Activated CD8-positive, alpha-beta T cell treated with anti-CD3 and anti-CD28 coated beads for 36 hours (primary cell): ENCODE measurements at regions of chr13 and their contacts with region 1.

Region 1: GRCh38 chr13:27147530-27148170 is 24.0 kb downstream of the USP12 start:
- DNase-seq: no peak
- ATAC-seq: peak; percentile 83
- H3K4me3 Mint-ChIP-seq: peak overlapping the region; percentile 61
- H3K27ac Mint-ChIP-seq: peak overlapping the region; percentile 98
- H3K4me1 Mint-ChIP-seq: peaks cover 76% of the 10 kb centered on the region
- H3K27me3 Mint-ChIP-seq: no peaks in the 10 kb centered on the region
- CTCF ChIP-seq: no peak

Region 2: DNA sequence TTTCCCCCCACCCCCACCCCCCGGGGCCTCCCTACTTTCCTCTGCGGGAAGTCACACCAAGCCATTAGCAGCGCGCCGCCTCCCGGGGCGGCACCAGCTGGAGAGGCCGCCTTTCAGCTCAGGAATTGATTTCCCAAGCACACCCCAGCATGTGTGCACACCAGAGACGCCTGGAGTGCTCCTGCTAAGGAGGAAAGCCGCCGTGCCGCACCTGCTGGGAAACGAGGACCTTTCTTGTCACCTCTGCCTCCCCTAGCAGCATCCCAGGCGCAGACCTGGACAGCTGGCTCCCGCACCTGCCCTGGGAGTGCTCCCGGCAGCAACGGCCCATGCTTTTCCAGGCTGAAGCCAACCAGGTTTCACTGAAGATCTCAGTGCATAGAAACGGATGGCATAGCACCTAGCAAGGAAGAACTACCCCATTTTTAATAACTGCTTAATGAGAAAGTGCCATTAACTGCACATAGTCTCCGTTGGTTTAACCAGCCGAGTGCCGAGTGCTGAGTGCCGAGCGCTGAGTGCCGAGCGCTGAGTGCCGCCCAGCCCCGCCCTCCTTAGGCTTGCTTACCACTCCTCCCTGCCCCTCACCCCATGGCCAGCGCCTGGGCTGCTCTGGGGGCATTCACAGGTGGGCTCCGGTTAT is 141.0 kb before region 1 on chr13:
- CTCF ChIA-PET with region 1: no interaction called
- POLR2A ChIA-PET with region 1: no interaction called
- intact Hi-C with region 1: no loop called
- DNase-seq: peak; percentile 7
- ATAC-seq: no peak
- H3K4me3 Mint-ChIP-seq: no peak overlapping the region
- H3K27ac Mint-ChIP-seq: no peak overlapping the region
- H3K4me1 Mint-ChIP-seq: peaks cover 8% of the 10 kb centered on the region
- H3K27me3 Mint-ChIP-seq: peaks cover 46% of the 10 kb centered on the region
- CTCF ChIP-seq: no peak

Region 3: GRCh38 chr13:27130979-27131623 is 16.5 kb before region 1 on chr13:
- CTCF ChIA-PET with region 1: interaction called, 7 read pairs
- POLR2A ChIA-PET with region 1: interaction called, 5 read pairs
- intact Hi-C with region 1: loop called (anchors 2 kb)
- DNase-seq: peak; percentile 90
- ATAC-seq: peak; percentile 86
- H3K4me3 Mint-ChIP-seq: peak overlapping the region; percentile 7
- H3K27ac Mint-ChIP-seq: peak overlapping the region; percentile 82
- H3K4me1 Mint-ChIP-seq: peaks cover 89% of the 10 kb centered on the region
- H3K27me3 Mint-ChIP-seq: no peaks in the 10 kb centered on the region
- CTCF ChIP-seq: no peak

Region 4: DNA sequence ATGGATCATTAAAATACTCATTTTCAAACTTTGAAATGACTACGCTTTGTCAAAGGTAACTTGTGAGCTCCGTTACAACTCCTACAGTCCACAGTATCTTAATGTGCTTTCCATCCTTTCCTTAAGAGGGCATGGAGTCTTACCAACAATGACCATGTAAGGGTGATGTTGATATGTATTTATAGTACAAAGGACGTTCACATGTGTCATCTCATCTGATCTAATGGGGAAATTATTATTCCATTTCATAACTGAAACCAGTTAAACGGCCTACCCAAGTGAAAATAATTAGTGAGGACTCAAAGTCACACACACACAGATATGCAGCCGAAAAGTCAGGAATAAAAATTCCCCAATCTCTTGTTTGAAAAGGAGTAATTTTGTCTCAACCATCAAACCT is 14.3 kb after region 1 on chr13:
- CTCF ChIA-PET with region 1: interaction called, 17 read pairs
- POLR2A ChIA-PET with region 1: interaction called, 6 read pairs
- intact Hi-C with region 1: no loop called
- DNase-seq: no peak
- ATAC-seq: no peak
- H3K4me3 Mint-ChIP-seq: no peak overlapping the region
- H3K27ac Mint-ChIP-seq: no peak overlapping the region
- H3K4me1 Mint-ChIP-seq: peaks cover 65% of the 10 kb centered on the region
- H3K27me3 Mint-ChIP-seq: no peaks in the 10 kb centered on the region
- CTCF ChIP-seq: no peak

Region 5: DNA sequence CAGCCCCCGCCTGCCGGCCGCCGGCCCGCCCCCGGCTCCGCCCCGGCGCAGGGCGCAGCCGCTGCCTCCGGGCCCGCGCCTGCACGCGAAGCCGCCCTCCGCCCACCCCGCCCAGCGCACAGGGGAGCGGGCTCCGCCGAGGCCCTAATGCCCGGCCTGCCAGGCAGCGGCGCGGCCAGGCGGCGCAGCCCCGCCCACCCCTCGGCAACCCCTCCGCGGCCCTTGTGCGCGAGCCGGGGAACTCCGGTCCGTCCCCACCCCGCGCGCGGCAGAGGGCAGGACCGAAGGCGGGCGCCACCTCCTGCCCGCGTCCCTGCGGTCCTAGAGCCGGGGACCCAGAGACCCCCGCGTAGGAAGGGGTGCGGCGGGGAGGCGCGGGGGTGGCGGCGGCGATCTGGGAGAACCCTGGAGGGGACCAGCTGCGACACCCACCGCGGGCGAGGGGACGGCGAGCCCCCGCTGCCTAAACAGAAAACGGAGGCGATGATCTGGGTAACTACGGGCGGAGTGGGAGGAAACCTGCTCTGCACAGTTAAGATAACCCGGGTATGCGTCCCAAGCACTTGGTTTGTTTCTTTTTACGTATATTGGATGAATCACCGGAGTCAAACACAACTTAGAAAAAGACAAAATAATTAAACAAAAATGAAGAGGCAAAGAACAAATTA is 24.3 kb after region 1 on chr13:
- CTCF ChIA-PET with region 1: no interaction called
- POLR2A ChIA-PET with region 1: interaction called, 3 read pairs
- intact Hi-C with region 1: loop called (anchors 2 kb)
- DNase-seq: peak; percentile 88
- ATAC-seq: peak; percentile 84
- H3K4me3 Mint-ChIP-seq: peak overlapping the region; percentile 70
- H3K27ac Mint-ChIP-seq: peak overlapping the region; percentile 83
- H3K4me1 Mint-ChIP-seq: peaks cover 54% of the 10 kb centered on the region
- H3K27me3 Mint-ChIP-seq: no peaks in the 10 kb centered on the region
- CTCF ChIP-seq: no peak

Region 6: GRCh38 chr13:27211771-27212364 is 64.2 kb after region 1 on chr13:
- CTCF ChIA-PET with region 1: no interaction called
- POLR2A ChIA-PET with region 1: no interaction called
- intact Hi-C with region 1: no loop called
- DNase-seq: no peak
- ATAC-seq: no peak
- H3K4me3 Mint-ChIP-seq: no peak overlapping the region
- H3K27ac Mint-ChIP-seq: no peak overlapping the region
- H3K4me1 Mint-ChIP-seq: peaks cover 4% of the 10 kb centered on the region
- H3K27me3 Mint-ChIP-seq: no peaks in the 10 kb centered on the region
- CTCF ChIP-seq: no peak